Cardiac septum (tissue), 1 donor: ENCODE measurements at regions of chr20 and their contacts with region 1.

Region 1: GRCh38 chr20:48295445-48295963 is 510.2 kb upstream of the SULF2 start:
- DNase-seq: no peak

Region 2: GRCh38 chr20:47725248-47725973 is 570.1 kb before region 1 on chr20:
- intact Hi-C with region 1: loop called (anchors 10 kb)
- DNase-seq: peak; percentile 89

Region 3: DNA sequence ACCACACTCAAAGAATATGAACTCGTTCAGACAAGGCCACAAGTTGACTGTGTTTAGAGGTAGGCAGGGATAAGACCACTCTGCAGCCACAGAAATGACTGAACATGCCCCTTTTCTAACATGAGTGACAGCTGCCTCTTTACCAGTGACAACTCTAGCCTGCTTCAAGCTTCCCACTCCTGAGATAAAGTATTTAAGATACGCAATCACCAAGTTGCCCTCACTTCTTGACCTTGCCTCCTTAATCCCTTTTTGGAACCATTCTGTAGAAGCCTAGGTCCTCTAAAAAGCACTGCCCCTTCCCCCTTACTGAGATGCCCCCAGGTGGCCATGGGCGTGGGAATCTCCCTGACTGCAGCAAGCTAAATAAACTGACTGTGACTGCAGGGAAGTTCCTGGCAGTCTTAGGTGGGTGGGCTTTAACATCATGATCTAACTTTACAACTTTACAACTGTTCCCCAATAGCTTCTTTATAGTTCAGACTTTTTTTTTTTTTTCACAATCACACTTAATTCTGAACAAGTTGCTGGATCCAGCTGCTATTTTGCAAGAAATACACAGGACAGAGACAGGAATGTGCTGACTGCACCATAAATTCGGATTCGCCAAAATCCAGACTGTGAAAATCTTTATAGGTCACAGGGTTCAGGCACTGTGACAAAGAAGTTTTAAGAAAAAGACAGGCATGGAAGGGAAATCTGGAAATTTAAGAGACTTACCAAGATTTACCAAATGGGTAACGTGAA is 166.1 kb before region 1 on chr20:
- intact Hi-C with region 1: no loop called
- DNase-seq: no peak